Mammary epithelial cell (primary cell): ENCODE measurements at regions of chr12 and their contacts with region 1.

Region 1: DNA sequence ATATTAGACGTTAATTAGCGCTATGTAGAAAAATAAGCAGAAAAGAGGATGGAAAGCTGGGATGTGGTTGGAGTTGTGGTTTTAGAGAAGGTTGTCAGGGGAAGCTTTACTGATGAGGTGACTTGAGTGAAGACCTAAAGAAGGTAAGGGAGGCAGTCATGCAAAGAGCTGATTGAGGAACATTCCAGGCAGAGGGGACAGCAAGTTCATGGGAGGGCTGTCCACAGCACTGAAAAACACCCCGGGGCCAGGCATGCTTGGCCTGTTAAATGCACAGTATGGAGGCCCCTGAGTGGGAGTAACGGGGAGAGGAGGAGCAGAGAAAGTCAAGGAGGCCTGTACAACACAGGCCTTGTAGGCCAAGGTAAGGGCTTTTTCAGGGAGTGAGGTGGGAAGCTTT is 15.6 kb downstream of the SMAGP start:
- DNase-seq: no peak
- H3K4me3 ChIP-seq: no peak overlapping the region
- H3K27ac ChIP-seq: no peak overlapping the region
- H3K4me1 ChIP-seq: no peaks in the 10 kb centered on the region
- H3K27me3 ChIP-seq: no peaks in the 10 kb centered on the region
- CTCF ChIP-seq: no peak

Region 2: GRCh38 chr12:51160814-51161459 is 93.7 kb before region 1 on chr12:
- CTCF ChIA-PET with region 1: no interaction called
- dilution Hi-C with region 1: no loop called
- in situ Hi-C with region 1: no loop called
- intact Hi-C with region 1: no loop called
- DNase-seq: no peak
- H3K4me3 ChIP-seq: no peak overlapping the region
- H3K27ac ChIP-seq: no peak overlapping the region
- H3K4me1 ChIP-seq: no peaks in the 10 kb centered on the region
- H3K27me3 ChIP-seq: no peaks in the 10 kb centered on the region
- CTCF ChIP-seq: no peak

Region 3: DNA sequence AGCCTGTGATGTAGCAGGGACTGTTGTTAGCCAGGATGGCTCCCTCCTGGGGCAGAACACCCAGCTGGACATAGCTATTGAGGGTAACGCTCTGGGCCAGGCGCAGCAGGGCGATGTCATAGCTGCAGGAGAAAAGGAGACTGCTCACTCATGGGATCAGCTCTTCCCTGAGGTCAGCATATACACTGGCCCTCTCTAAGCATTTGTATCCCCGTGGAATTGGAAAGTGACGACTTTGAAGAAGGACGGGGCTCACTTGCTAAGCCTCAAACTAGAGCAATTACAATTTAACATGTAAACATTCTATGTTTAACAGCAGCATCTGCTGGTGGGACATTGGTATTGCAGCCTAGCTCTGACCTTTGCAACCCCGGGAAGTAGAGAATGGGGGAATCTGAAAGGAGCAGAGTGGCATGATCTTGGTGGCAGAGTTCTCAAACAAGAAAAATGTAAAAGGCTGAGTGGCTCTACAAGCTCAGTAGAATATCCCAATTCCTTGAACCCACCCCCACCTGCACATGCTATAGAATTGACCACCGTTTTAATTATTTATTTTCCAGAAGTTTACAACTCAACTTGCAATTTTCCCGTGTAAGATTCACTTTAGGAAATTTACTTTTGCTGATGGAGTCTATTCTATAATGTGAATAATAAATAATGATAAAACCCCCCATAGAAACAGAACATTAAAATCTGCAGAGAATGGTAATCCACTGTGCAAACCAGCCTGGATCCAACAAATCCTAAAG is 86.8 kb after region 1 on chr12:
- CTCF ChIA-PET with region 1: no interaction called
- dilution Hi-C with region 1: loop called (anchors 5 kb)
- in situ Hi-C with region 1: no loop called
- intact Hi-C with region 1: no loop called
- DNase-seq: peak; percentile 48
- H3K4me3 ChIP-seq: no peak overlapping the region
- H3K27ac ChIP-seq: no peak overlapping the region
- H3K4me1 ChIP-seq: peaks cover 2% of the 10 kb centered on the region
- H3K27me3 ChIP-seq: no peaks in the 10 kb centered on the region
- CTCF ChIP-seq: peak; percentile 99 to 100